Heart left ventricle (tissue), 16 donors: ENCODE measurements at regions of chr3 and their contacts with region 1.

Region 1: GRCh38 chr3:21747376-21747775 is 3.6 kb downstream of the ZNF385D start:
- DNase-seq: no peak
- ATAC-seq: no peak
- H3K4me3 ChIP-seq: peak overlapping the region in 6 of 12 donors; percentile 7 to 73 (median 66)
- H3K27ac ChIP-seq: peak overlapping the region in 5 of 12 donors; percentile 22 to 41 (median 36)
- H3K4me1 ChIP-seq: peaks cover 0 to 65% (median 20%) of the 10 kb centered on the region in 12 donors
- H3K27me3 ChIP-seq: no peaks in the 10 kb centered on the region
- CTCF ChIP-seq: no peak
- POLR2A ChIP-seq: no peak

Region 2: GRCh38 chr3:21562243-21562642 is 185.1 kb before region 1 on chr3:
- intact Hi-C with region 1: loop called in 1 of 10 experiments (anchors 10 kb)
- DNase-seq: no peak
- ATAC-seq: peak in 3 of 4 donors; percentile 53 to 84 (median 76)
- H3K4me3 ChIP-seq: no peak overlapping the region
- H3K27ac ChIP-seq: peak overlapping the region in 1 of 12 donors; percentile 33
- H3K4me1 ChIP-seq: peaks cover 0 to 15% (median 0%) of the 10 kb centered on the region in 12 donors
- H3K27me3 ChIP-seq: no peaks in the 10 kb centered on the region
- CTCF ChIP-seq: no peak
- POLR2A ChIP-seq: no peak

Region 3: GRCh38 chr3:21621181-21621651 is 126.2 kb before region 1 on chr3:
- intact Hi-C with region 1: loop called in 1 of 10 experiments (anchors 5 kb)
- DNase-seq: no peak
- ATAC-seq: no peak
- H3K4me3 ChIP-seq: no peak overlapping the region
- H3K27ac ChIP-seq: no peak overlapping the region
- H3K4me1 ChIP-seq: peaks cover 0 to 21% (median 5%) of the 10 kb centered on the region in 12 donors
- H3K27me3 ChIP-seq: no peaks in the 10 kb centered on the region
- CTCF ChIP-seq: no peak
- POLR2A ChIP-seq: no peak